Common myeloid progenitor, CD34-positive (primary cell): ENCODE measurements at regions of chr16 and their contacts with region 1.

Region 1: DNA sequence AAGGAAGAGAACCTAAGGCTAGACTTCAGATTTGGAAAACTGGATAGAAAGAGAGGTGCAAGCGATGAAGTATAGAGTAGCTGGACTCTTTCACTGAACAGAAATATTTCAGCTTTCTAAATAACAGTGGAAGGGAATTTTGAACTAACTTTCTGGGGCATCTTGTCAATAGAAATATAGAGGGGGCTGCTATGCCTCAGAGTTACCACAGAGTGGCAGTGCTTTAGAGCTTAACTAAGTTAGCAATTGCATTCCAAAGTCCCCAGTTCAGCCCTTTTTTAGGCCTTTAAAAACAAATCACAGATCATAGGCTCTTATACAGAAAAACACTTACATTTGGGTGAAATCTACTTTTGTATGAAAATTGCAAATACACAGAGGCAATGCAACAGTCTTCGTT is 154.2 kb upstream of the CDH8 start:
- DNase-seq: peak; percentile 7 to 25 (median 14)
- H3K4me3 ChIP-seq: no peak overlapping the region
- H3K27ac ChIP-seq: no peak overlapping the region
- H3K4me1 ChIP-seq: no peaks in the 10 kb centered on the region
- H3K27me3 ChIP-seq: no peaks in the 10 kb centered on the region

Region 2: GRCh38 chr16:63289852-63290460 is 1099.5 kb after region 1 on chr16:
- CTCF ChIA-PET with region 1: interaction called, 18 read pairs
- POLR2A ChIA-PET with region 1: no interaction called
- DNase-seq: peak; percentile 55 to 78 (median 72)
- H3K4me3 ChIP-seq: no peak overlapping the region
- H3K27ac ChIP-seq: no peak overlapping the region
- H3K4me1 ChIP-seq: no peaks in the 10 kb centered on the region
- H3K27me3 ChIP-seq: no peaks in the 10 kb centered on the region